B cell (primary cell): ENCODE measurements at regions of chr10 and their contacts with region 1.

Region 1: DNA sequence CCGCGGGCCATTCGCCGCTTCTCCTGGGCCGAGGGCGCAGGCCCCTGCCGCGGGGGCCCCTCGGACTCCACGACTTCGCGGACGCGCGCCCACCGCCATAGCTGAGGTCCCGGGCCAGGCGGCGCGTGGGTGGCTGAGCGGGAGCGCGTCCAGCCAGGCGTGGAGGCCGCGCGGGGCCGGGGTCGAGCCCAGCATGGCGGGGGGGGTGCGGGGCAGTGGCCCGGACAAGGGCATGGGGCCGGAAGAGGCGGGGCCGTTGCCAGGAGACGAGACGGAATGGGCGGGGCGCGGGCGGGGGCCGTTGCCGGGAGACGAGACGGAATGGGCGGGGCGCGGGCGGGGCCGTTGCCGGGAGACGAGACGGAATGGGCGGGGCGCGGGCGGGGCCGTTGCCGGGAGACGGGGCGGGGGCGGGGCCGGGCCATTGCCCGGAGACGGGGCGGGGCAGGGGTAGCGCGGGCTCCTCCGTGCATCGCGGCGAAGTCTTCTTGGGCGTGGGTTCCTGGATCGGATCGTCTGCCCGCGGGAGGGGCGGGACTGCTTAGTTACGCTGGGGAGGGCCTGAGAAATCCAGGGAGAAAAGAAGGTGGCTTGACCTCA is 14.8 kb downstream of the ADAM8 start:
- DNase-seq: peak; percentile 88
- ATAC-seq: peak; percentile 56
- H3K4me3 ChIP-seq: peak overlapping the region in 4 of 5 experiments; percentile 49 to 79 (median 62)
- H3K4me3 Mint-ChIP-seq: peak overlapping the region; percentile 89
- H3K27ac ChIP-seq: peak overlapping the region; percentile 73 to 87
- H3K27ac Mint-ChIP-seq: peak overlapping the region; percentile 73
- H3K4me1 ChIP-seq: peaks cover 59 to 78% of the 10 kb centered on the region in 2 donors
- H3K4me1 Mint-ChIP-seq: peaks cover 74% of the 10 kb centered on the region
- H3K27me3 ChIP-seq: no peaks in the 10 kb centered on the region
- H3K27me3 Mint-ChIP-seq: no peaks in the 10 kb centered on the region
- CTCF ChIP-seq: no peak

Region 2: DNA sequence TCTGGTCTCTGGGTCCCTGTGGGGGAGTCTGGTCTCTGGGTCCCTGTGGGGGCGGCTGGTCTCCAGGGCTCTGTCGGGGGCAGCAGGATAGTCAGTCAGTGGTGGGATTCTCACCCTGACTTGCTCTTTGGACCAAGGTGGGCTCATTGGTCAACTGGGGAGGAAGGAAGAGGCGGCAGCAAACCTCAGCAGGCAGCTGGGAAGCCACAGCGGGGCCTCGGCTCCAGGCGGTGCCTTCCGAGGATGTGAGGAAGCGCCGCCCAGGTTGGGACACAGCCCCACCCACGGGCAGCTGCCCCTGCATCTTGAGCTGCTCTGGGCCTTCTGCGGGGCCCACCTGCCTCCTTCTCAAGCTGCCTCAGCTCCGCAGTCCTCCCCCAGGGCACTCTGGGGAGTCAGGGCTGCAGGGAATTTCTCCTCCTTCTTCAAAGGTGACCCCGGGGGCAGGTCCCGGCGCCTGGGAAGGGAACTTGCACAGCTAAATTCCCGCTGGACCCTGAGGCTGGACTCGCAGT is 122.2 kb before region 1 on chr10:
- CTCF ChIA-PET with region 1: interaction called, 18 read pairs
- POLR2A ChIA-PET with region 1: no interaction called
- intact Hi-C with region 1: no loop called
- DNase-seq: no peak
- ATAC-seq: no peak
- H3K4me3 ChIP-seq: no peak overlapping the region
- H3K4me3 Mint-ChIP-seq: no peak overlapping the region
- H3K27ac ChIP-seq: no peak overlapping the region
- H3K27ac Mint-ChIP-seq: no peak overlapping the region
- H3K4me1 ChIP-seq: peaks cover 3 to 6% of the 10 kb centered on the region in 2 donors
- H3K4me1 Mint-ChIP-seq: peaks cover 12% of the 10 kb centered on the region
- H3K27me3 ChIP-seq: peaks cover 0 to 15% (median 0%) of the 10 kb centered on the region in 4 experiments
- H3K27me3 Mint-ChIP-seq: peaks cover 17% of the 10 kb centered on the region
- CTCF ChIP-seq: no peak

Region 3: GRCh38 chr10:133278577-133279265 is 16.9 kb after region 1 on chr10:
- CTCF ChIA-PET with region 1: interaction called, 80 read pairs
- POLR2A ChIA-PET with region 1: interaction called, 12 read pairs
- intact Hi-C with region 1: loop called (anchors 1 kb)
- DNase-seq: peak; percentile 68
- ATAC-seq: peak; percentile 24
- H3K4me3 ChIP-seq: peak overlapping the region in 1 of 5 experiments; percentile 33
- H3K4me3 Mint-ChIP-seq: peak overlapping the region; percentile 90
- H3K27ac ChIP-seq: peak overlapping the region; percentile 57 to 97
- H3K27ac Mint-ChIP-seq: peak overlapping the region; percentile 95
- H3K4me1 ChIP-seq: peaks cover 45 to 63% of the 10 kb centered on the region in 2 donors
- H3K4me1 Mint-ChIP-seq: peaks cover 43% of the 10 kb centered on the region
- H3K27me3 ChIP-seq: no peaks in the 10 kb centered on the region
- H3K27me3 Mint-ChIP-seq: no peaks in the 10 kb centered on the region
- CTCF ChIP-seq: no peak

Region 4: GRCh38 chr10:133318494-133319127 is 56.8 kb after region 1 on chr10:
- CTCF ChIA-PET with region 1: interaction called, 16 read pairs
- POLR2A ChIA-PET with region 1: no interaction called
- intact Hi-C with region 1: no loop called
- DNase-seq: peak; percentile 77
- ATAC-seq: peak; percentile 92
- H3K4me3 ChIP-seq: peak overlapping the region in 4 of 5 experiments; percentile 18 to 44 (median 28)
- H3K4me3 Mint-ChIP-seq: peak overlapping the region; percentile 71
- H3K27ac ChIP-seq: no peak overlapping the region
- H3K27ac Mint-ChIP-seq: no peak overlapping the region
- H3K4me1 ChIP-seq: peaks cover 9 to 15% of the 10 kb centered on the region in 2 donors
- H3K4me1 Mint-ChIP-seq: peaks cover 18% of the 10 kb centered on the region
- H3K27me3 ChIP-seq: peaks cover 0 to 14% (median 7%) of the 10 kb centered on the region in 4 experiments
- H3K27me3 Mint-ChIP-seq: peaks cover 24% of the 10 kb centered on the region
- CTCF ChIP-seq: peak; percentile 92

Region 5: DNA sequence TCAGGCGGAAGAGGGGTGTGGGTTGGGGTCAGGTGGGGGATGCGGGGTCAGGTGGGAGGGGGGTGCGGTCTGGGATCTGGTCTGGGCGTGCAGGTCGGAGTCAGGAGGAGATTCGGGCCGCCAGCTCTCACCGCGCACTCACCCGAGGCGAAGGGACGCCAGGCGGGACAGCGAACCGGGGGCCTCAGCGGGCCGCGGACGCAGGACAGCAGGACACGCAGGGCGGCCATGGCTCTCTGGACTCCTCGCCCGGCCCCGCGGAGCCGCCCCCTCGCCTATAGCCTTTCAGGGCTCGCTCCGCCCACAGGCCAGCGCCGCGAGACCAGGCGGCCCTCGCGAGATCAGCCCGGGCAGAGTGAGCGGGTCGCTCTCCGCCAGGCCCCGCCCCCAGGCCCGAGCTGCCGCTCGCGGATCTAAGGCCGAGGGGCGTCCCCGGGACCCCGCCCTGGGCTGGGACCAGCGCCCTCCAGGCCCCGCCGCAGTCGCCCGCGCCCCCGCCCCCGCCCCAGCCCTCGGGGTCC is 111.3 kb after region 1 on chr10 and contains the start of gene ECHS1:
- CTCF ChIA-PET with region 1: no interaction called
- POLR2A ChIA-PET with region 1: no interaction called
- intact Hi-C with region 1: loop called (anchors 5 kb)
- DNase-seq: peak; percentile 92
- ATAC-seq: peak; percentile 96
- H3K4me3 ChIP-seq: peak within 1 kb of the TSS; percentile 53 to 74 (median 69)
- H3K4me3 Mint-ChIP-seq: peak within 1 kb of the TSS; percentile 87
- H3K27ac ChIP-seq: peak within 1 kb of the TSS; percentile 65 to 77
- H3K27ac Mint-ChIP-seq: peak within 1 kb of the TSS; percentile 84
- H3K4me1 ChIP-seq: peaks cover 15 to 27% of the 10 kb centered on the region in 2 donors
- H3K4me1 Mint-ChIP-seq: peaks cover 18% of the 10 kb centered on the region
- H3K27me3 ChIP-seq: no peaks in the 10 kb centered on the region
- H3K27me3 Mint-ChIP-seq: no peaks in the 10 kb centered on the region
- CTCF ChIP-seq: no peak
- total RNA-seq, gene ECHS1: 27.5 and 29.5 TPM in 2 replicates

Region 6: DNA sequence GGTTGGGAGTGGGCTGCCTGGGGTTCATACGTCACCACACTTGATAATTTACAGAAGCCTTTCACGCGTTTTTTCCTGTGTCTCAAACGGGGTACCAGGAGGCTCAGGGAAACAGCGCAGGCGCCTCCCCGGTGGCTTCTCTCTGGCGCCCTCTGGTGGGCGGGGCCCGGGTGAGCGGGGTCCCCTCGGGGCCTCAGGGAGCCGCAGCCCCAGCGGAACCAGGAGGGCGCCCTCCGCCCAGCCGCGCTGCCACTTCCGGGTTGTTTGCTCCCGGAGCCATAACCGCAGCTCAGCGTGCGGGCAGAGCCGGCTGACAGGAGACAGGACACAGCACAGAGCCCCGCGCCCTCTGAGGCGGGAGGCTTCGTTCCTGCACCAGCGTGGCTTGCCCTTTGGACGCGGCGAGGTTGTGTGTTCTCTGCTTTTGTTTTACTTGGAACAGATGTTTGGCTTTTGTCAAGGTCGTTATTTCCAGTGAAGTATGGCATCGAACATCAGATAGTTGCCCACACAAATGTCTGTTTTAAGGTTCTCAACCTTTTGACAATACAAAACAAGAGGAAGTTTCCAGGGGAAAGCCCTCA is 258.4 kb after region 1 on chr10:
- CTCF ChIA-PET with region 1: no interaction called
- POLR2A ChIA-PET with region 1: no interaction called
- intact Hi-C with region 1: loop called (anchors 5 kb)
- DNase-seq: peak; percentile 88
- ATAC-seq: peak; percentile 100
- H3K4me3 ChIP-seq: peak overlapping the region; percentile 9 to 65 (median 52)
- H3K4me3 Mint-ChIP-seq: peak overlapping the region; percentile 70
- H3K27ac ChIP-seq: no peak overlapping the region
- H3K27ac Mint-ChIP-seq: no peak overlapping the region
- H3K4me1 ChIP-seq: peaks cover 4 to 12% of the 10 kb centered on the region in 2 donors
- H3K4me1 Mint-ChIP-seq: peaks cover 13% of the 10 kb centered on the region
- H3K27me3 ChIP-seq: no peaks in the 10 kb centered on the region
- H3K27me3 Mint-ChIP-seq: peaks cover 16% of the 10 kb centered on the region
- CTCF ChIP-seq: peak; percentile 95